ENCODE measurements at regions of chr1 and their contacts with region 1.

Region 1: GRCh38 chr1:203340112-203340804 is 10.7 kb downstream of the FMOD start:
- DNase-seq: no peak
- H3K4me3 ChIP-seq: no peak overlapping the region
- CTCF ChIP-seq: peak; percentile 83

Region 2: GRCh38 chr1:202625416-202626360 is 714.6 kb before region 1 on chr1:
- CTCF ChIA-PET with region 1: no interaction called
- POLR2A ChIA-PET with region 1: no interaction called
- DNase-seq: no peak
- H3K4me3 ChIP-seq: no peak overlapping the region
- CTCF ChIP-seq: peak; percentile 89

Region 3: GRCh38 chr1:203304919-203305808 is 35.1 kb before region 1 on chr1 and contains the start of gene BTG2:
- CTCF ChIA-PET with region 1: interaction called, 58 read pairs
- POLR2A ChIA-PET with region 1: no interaction called
- DNase-seq: no peak
- H3K4me3 ChIP-seq: peak within 1 kb of the TSS; percentile 85
- CTCF ChIP-seq: no peak

Region 4: DNA sequence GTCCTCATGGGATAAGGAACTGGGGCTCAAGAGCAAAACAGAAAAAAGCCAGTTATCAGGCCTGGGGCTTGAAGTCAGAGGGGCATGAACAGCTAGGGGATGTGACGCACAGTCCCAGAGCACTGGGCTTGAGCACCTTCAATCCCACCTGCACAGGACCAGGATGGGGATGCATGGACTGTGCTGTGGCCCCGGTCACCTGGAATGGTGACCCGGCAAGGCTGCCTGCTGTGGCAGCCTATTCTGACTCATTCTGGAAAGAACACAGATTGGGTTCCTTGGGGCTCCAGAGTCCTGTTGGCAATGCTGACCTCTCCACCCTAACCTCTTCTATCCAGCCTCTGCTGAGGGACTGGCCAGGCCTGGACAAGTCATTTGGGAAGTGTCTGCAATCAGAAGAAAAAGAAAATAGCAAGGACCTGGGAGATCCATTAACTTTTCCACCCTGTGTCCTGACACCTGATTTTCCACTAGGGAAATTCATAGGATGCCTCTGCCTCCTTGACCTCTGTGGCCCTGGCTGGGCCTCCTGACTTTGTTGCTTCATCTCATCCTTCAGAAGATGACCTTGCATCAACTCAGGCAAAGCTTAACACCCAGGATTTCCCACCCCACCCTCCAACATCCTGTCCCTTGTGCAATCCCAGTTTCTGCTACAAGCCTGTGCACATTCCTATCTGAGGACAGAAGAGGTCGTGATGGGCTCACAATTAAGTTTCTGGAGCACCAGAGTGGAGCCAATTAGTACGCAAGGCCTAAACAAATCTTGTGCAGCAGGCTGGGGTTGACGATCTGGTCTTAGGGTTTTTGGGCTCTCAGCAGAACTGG is 28.6 kb after region 1 on chr1:
- CTCF ChIA-PET with region 1: interaction called, 238 read pairs
- POLR2A ChIA-PET with region 1: no interaction called
- DNase-seq: peak; percentile 54
- H3K4me3 ChIP-seq: no peak overlapping the region
- CTCF ChIP-seq: peak; percentile 53

Region 5: GRCh38 chr1:203448521-203449061 is 108.3 kb after region 1 on chr1:
- CTCF ChIA-PET with region 1: interaction called, 189 read pairs
- POLR2A ChIA-PET with region 1: no interaction called
- DNase-seq: no peak
- H3K4me3 ChIP-seq: no peak overlapping the region
- CTCF ChIP-seq: no peak

Region 6: DNA sequence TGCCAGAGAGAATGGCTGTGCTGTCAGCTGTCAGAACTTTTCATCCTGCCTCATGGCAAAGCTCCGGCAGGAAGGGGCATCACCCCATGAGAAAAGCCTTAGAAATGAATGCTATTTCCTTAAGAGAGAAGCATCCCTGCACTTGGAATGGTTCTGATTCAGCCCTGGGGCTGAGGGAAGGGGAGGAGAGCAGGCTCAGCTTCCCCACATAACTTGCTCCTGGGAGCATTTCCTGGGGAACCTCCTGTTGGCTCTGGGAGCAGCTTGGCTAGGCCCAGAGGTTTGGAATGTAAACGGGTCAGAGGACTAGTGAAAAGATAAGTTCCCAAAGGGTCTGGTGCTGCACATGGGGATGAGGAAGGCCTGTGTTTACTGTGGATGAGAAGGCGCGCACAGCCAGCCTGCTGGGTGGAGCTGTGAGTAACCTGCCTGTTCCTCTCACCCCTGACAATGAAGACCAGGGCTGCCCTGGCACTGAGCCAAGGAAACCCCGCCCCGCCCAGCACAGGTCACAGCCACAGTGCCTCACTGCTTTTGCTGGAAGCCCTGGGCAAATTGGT is 140.3 kb after region 1 on chr1:
- CTCF ChIA-PET with region 1: interaction called, 683 read pairs
- POLR2A ChIA-PET with region 1: no interaction called
- DNase-seq: peak; percentile 88
- H3K4me3 ChIP-seq: peak overlapping the region; percentile 24
- CTCF ChIP-seq: no peak

Region 7: DNA sequence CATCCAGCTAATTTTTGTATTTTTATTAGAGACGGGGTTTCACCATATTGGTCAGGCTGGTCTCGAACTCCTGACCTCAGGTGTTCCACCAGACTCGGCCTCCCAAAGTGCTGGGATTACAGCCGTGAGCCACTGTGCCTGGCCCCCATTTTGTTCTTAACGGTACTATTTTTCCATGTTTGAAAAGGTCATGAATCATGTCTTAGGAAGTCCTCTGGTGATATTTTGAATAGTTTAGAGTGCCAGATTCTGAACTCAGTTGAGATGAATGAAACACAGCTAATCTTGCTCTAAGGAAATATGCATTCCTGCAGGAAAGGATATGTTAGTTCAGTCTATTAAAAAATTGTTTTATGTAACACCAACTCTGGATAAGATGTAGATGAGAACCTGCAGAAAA is 223.8 kb after region 1 on chr1:
- CTCF ChIA-PET with region 1: no interaction called
- POLR2A ChIA-PET with region 1: no interaction called
- DNase-seq: no peak
- H3K4me3 ChIP-seq: no peak overlapping the region
- CTCF ChIP-seq: no peak

Region 8: GRCh38 chr1:203711251-203712007 is 371.2 kb after region 1 on chr1:
- CTCF ChIA-PET with region 1: no interaction called
- POLR2A ChIA-PET with region 1: no interaction called
- DNase-seq: no peak
- H3K4me3 ChIP-seq: no peak overlapping the region
- CTCF ChIP-seq: no peak